K562 (cell line): ENCODE measurements at regions of chr11 and their contacts with region 1.

Region 1: DNA sequence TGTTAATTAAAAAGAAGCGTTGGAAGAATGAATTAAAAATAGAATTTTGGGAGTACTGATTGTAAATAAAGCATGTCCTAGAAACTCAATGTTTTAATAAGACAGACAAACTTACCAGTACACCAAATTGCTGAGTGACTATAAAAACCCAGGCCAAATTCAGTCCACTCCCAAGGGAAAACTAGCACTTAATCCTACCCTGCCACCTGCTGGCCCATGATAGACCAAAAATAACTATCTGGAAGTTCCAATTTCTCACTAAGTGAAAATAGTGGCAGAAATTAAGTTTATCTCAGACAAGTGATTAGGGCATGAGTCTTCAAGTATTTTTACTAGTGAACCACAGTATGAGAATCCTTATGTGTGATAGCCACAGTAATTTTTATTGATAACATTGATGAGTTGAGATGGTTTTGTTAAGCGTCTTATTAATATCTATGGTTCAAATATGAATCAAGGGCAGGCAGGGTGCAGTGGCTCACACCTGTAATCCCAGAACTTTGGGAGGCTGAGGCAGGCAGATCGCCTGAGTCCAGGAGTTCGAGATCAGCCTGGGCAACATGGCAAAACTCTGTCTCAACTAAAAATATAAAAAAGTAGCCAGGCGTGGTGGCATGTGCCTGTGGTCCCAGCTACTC is 9.8 kb upstream of the DDX10 start:
- DNase-seq: peak in 3 of 4 experiments; percentile 30 to 72 (median 64)
- ATAC-seq: peak; percentile 92
- H3K4me3 ChIP-seq: no peak overlapping the region
- H3K27ac ChIP-seq: no peak overlapping the region
- H3K4me1 ChIP-seq: no peaks in the 10 kb centered on the region
- H3K27me3 ChIP-seq: no peaks in the 10 kb centered on the region
- CTCF ChIP-seq: peak; percentile 67 to 88 (median 67)
- EP300 ChIP-seq: no peak
- POLR2A ChIP-seq: no peak
- RAD21 ChIP-seq: peak; percentile 86 to 90

Region 2: DNA sequence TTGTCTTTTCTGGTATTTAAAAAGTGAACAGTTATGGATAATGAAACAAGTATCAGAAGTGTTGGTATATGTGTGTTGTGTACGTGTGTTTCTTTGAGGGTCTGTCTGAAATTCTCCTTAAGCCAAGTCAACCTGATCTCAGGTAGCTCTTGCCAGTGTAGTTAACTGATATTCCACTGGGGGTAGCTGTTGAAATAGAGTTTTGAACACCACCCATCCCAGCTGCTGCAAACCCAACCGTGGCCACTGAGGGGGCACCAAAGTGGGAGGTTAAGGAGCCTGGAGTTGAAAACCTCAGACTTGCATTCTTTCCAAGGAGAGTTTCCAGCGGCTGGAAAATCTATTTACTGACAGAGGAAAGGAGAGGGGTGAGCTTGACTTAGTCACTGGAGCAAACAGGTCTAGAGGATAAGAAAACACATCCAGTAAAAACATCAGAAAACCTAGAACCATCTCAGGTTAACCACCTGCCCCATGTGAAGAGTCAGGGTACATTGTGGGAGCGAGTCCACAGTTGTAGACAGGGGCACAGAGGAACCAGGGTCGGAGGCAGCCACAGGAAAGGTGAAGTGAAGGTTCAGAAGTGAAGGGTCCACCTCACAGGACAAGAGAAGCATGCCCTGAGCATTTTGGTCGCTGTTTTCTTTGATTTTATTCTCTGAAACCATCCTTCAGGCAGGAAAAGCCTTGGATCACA is 655.2 kb before region 1 on chr11:
- CTCF ChIA-PET with region 1: no interaction called
- POLR2A ChIA-PET with region 1: no interaction called
- in situ Hi-C with region 1: loop called (anchors 10 kb)
- intact Hi-C with region 1: loop called (anchors 2 kb)
- DNase-seq: peak; percentile 58 to 84 (median 70)
- ATAC-seq: peak; percentile 99
- H3K4me3 ChIP-seq: no peak overlapping the region
- H3K27ac ChIP-seq: no peak overlapping the region
- H3K4me1 ChIP-seq: 0 out of 5 replicates have a peak, but pooled peaks cover 0 to 3% of the 10 kb centered on the region in 2 experiments
- H3K27me3 ChIP-seq: no peaks in the 10 kb centered on the region; a peak in 1 of 5 replicates
- CTCF ChIP-seq: peak; percentile 87 to 99 (median 97)
- EP300 ChIP-seq: no peak
- POLR2A ChIP-seq: no peak
- RAD21 ChIP-seq: peak; percentile 60 to 81

Region 3: GRCh38 chr11:108008656-108009496 is 646.2 kb before region 1 on chr11 and contains the start of gene CUL5:
- CTCF ChIA-PET with region 1: no interaction called
- POLR2A ChIA-PET with region 1: no interaction called
- in situ Hi-C with region 1: loop called (anchors 10 kb)
- intact Hi-C with region 1: no loop called
- DNase-seq: peak; percentile 89 to 95 (median 91)
- ATAC-seq: peak; percentile 83
- H3K4me3 ChIP-seq: peak within 1 kb of the TSS; percentile 90
- H3K27ac ChIP-seq: peak within 1 kb of the TSS; percentile 99
- H3K4me1 ChIP-seq: peaks cover 12 to 20% of the 10 kb centered on the region in 2 experiments; a peak in 3 of 5 replicates
- H3K27me3 ChIP-seq: no peaks in the 10 kb centered on the region
- CTCF ChIP-seq: peak; percentile 87 to 88 (median 88)
- EP300 ChIP-seq: 0 out of 2 replicates have a peak, but pooled peaks have one; percentile 11
- POLR2A ChIP-seq: peak; percentile 94
- RAD21 ChIP-seq: peak; percentile 62 to 80
- polyA plus RNA-seq, gene CUL5: 14.3 to 16.3 TPM

Region 4: GRCh38 chr11:108414958-108415357 is 240.2 kb before region 1 on chr11:
- CTCF ChIA-PET with region 1: interaction called, 14 read pairs
- POLR2A ChIA-PET with region 1: no interaction called
- in situ Hi-C with region 1: no loop called
- intact Hi-C with region 1: no loop called
- DNase-seq: no peak
- ATAC-seq: no peak
- H3K4me3 ChIP-seq: no peak overlapping the region
- H3K27ac ChIP-seq: no peak overlapping the region
- H3K4me1 ChIP-seq: no peaks in the 10 kb centered on the region
- H3K27me3 ChIP-seq: no peaks in the 10 kb centered on the region
- CTCF ChIP-seq: no peak
- EP300 ChIP-seq: no peak
- POLR2A ChIP-seq: no peak
- RAD21 ChIP-seq: no peak

Region 5: GRCh38 chr11:108886660-108887009 is 231.5 kb after region 1 on chr11:
- CTCF ChIA-PET with region 1: no interaction called
- POLR2A ChIA-PET with region 1: no interaction called
- in situ Hi-C with region 1: no loop called
- intact Hi-C with region 1: no loop called
- DNase-seq: no peak
- ATAC-seq: no peak
- H3K4me3 ChIP-seq: no peak overlapping the region
- H3K27ac ChIP-seq: no peak overlapping the region
- H3K4me1 ChIP-seq: no peaks in the 10 kb centered on the region
- H3K27me3 ChIP-seq: no peaks in the 10 kb centered on the region
- CTCF ChIP-seq: no peak
- EP300 ChIP-seq: no peak
- POLR2A ChIP-seq: no peak
- RAD21 ChIP-seq: no peak